B cell (primary cell): ENCODE measurements at regions of chr19 and their contacts with region 1.

Region 1: GRCh38 chr19:12736995-12737834 is at the start of gene GET3:
- DNase-seq: peak; percentile 93
- ATAC-seq: peak; percentile 76
- H3K4me3 ChIP-seq: peak within 1 kb of the TSS; percentile 67 to 93 (median 86)
- H3K4me3 Mint-ChIP-seq: peak within 1 kb of the TSS; percentile 100
- H3K27ac ChIP-seq: peak within 1 kb of the TSS; percentile 72 to 94
- H3K27ac Mint-ChIP-seq: peak within 1 kb of the TSS; percentile 99
- H3K4me1 ChIP-seq: peaks cover 36 to 43% of the 10 kb centered on the region in 2 donors
- H3K4me1 Mint-ChIP-seq: peaks cover 39% of the 10 kb centered on the region
- H3K27me3 ChIP-seq: no peaks in the 10 kb centered on the region
- H3K27me3 Mint-ChIP-seq: no peaks in the 10 kb centered on the region
- CTCF ChIP-seq: no peak
- total RNA-seq, gene GET3: 30.7 and 37.2 TPM in 2 replicates

Region 2: DNA sequence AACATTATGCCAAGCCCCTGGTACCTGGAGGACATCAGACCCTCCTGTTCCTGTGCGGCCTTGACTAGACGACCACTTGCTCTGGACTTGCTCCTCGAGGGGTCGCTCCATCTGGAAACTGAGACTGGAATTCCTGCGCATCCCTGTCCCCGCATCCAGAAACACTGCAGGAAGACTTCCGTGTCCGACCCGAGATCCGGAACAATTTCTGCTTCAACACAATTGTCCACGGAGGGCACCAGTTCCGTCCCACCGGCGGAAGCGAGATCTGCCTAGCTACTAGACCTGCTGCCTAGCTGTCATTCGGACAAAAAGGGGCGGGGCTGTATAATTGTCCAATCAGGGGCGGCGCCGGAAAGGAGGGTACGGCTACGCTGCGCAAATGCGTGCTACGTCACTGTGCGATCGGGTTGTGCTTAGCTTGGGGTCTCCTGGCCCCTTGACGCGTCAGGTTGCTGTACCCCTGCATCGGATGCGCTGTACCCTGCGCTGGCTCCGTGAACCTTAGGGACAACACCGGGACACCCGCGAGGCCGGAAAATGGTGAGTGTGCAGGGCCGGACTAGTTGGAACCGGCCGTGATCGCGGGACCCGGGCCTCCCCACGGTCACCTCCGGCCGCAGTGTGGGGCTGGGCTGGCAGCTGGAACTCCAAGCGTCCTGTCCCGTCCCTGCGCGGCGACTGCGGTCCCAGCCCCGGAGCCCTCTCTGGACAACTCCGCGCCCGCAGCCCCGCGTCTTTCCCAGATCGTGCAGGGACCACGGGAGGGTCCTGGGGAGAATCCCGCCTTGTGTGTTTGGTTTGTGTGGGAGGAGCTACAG is 126.5 kb before region 1 on chr19 and contains the starts of genes ZNF490 and ZNF791:
- CTCF ChIA-PET with region 1: interaction called, 4 read pairs
- POLR2A ChIA-PET with region 1: no interaction called
- intact Hi-C with region 1: loop called (anchors 5 kb)
- DNase-seq: peak; percentile 97
- ATAC-seq: peak; percentile 73
- H3K4me3 ChIP-seq: peak within 1 kb of the TSS; percentile 89 to 99 (median 98)
- H3K4me3 Mint-ChIP-seq: peak within 1 kb of the TSS; percentile 100
- H3K27ac ChIP-seq: peak within 1 kb of the TSS; percentile 93 to 96
- H3K27ac Mint-ChIP-seq: peak within 1 kb of the TSS; percentile 100
- H3K4me1 ChIP-seq: peaks cover 50 to 72% of the 10 kb centered on the region in 2 donors
- H3K4me1 Mint-ChIP-seq: peaks cover 54% of the 10 kb centered on the region
- H3K27me3 ChIP-seq: no peaks in the 10 kb centered on the region
- H3K27me3 Mint-ChIP-seq: no peaks in the 10 kb centered on the region
- CTCF ChIP-seq: no peak
- total RNA-seq, gene ZNF490: 19.9 and 21.2 TPM in 2 replicates
- total RNA-seq, gene ZNF791: 56.0 and 57.9 TPM in 2 replicates

Region 3: GRCh38 chr19:12628040-12629022 is 108.9 kb before region 1 on chr19:
- CTCF ChIA-PET with region 1: no interaction called
- POLR2A ChIA-PET with region 1: no interaction called
- intact Hi-C with region 1: no loop called
- DNase-seq: no peak
- ATAC-seq: no peak
- H3K4me3 ChIP-seq: no peak overlapping the region
- H3K4me3 Mint-ChIP-seq: no peak overlapping the region
- H3K27ac ChIP-seq: no peak overlapping the region
- H3K27ac Mint-ChIP-seq: no peak overlapping the region
- H3K4me1 ChIP-seq: no peaks in the 10 kb centered on the region
- H3K4me1 Mint-ChIP-seq: peaks cover 3% of the 10 kb centered on the region
- H3K27me3 ChIP-seq: no peaks in the 10 kb centered on the region
- H3K27me3 Mint-ChIP-seq: no peaks in the 10 kb centered on the region
- CTCF ChIP-seq: no peak

Region 4: GRCh38 chr19:12696366-12697335 is 40.6 kb before region 1 on chr19 and contains the start of gene FBXW9:
- CTCF ChIA-PET with region 1: interaction called, 6 read pairs
- POLR2A ChIA-PET with region 1: interaction called, 3 read pairs
- intact Hi-C with region 1: loop called (anchors 1 kb)
- DNase-seq: peak; percentile 98
- ATAC-seq: peak; percentile 87
- H3K4me3 ChIP-seq: peak within 1 kb of the TSS; percentile 64 to 88 (median 82)
- H3K4me3 Mint-ChIP-seq: peak within 1 kb of the TSS; percentile 94
- H3K27ac ChIP-seq: peak within 1 kb of the TSS; percentile 85 to 93
- H3K27ac Mint-ChIP-seq: peak within 1 kb of the TSS; percentile 98
- H3K4me1 ChIP-seq: peaks cover 13 to 17% of the 10 kb centered on the region in 2 donors
- H3K4me1 Mint-ChIP-seq: peaks cover 10% of the 10 kb centered on the region
- H3K27me3 ChIP-seq: no peaks in the 10 kb centered on the region
- H3K27me3 Mint-ChIP-seq: no peaks in the 10 kb centered on the region
- CTCF ChIP-seq: no peak
- total RNA-seq, gene FBXW9: 4.7 and 5.2 TPM in 2 replicates

Region 5: DNA sequence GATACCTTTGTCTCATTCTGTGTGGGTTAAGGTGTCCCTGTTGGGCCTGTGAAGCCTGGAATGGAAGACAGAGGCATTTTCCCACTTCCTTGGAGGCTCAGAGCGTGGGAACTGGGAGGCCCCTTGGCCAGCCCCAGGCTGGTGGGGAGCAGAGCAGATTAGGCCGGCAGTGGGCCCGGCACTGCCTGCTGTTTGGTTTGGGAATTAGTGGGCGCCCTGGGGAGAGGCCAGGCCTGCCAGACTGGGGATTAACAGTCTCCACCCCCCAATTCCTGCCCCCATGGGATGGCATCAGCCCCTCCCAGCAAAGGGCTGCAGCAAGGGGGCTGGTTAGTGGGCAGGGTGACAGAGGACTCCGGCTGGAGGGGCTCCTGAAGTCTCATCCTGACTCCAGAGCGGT is 11.3 kb after region 1 on chr19:
- CTCF ChIA-PET with region 1: no interaction called
- POLR2A ChIA-PET with region 1: no interaction called
- intact Hi-C with region 1: no loop called
- DNase-seq: no peak
- ATAC-seq: no peak
- H3K4me3 ChIP-seq: no peak overlapping the region
- H3K4me3 Mint-ChIP-seq: no peak overlapping the region
- H3K27ac ChIP-seq: no peak overlapping the region
- H3K27ac Mint-ChIP-seq: no peak overlapping the region
- H3K4me1 ChIP-seq: peaks cover 5 to 7% of the 10 kb centered on the region in 2 donors
- H3K4me1 Mint-ChIP-seq: peaks cover 4% of the 10 kb centered on the region
- H3K27me3 ChIP-seq: peaks cover 0 to 4% (median 0%) of the 10 kb centered on the region in 4 experiments
- H3K27me3 Mint-ChIP-seq: peaks cover 21% of the 10 kb centered on the region
- CTCF ChIP-seq: no peak

Region 6: DNA sequence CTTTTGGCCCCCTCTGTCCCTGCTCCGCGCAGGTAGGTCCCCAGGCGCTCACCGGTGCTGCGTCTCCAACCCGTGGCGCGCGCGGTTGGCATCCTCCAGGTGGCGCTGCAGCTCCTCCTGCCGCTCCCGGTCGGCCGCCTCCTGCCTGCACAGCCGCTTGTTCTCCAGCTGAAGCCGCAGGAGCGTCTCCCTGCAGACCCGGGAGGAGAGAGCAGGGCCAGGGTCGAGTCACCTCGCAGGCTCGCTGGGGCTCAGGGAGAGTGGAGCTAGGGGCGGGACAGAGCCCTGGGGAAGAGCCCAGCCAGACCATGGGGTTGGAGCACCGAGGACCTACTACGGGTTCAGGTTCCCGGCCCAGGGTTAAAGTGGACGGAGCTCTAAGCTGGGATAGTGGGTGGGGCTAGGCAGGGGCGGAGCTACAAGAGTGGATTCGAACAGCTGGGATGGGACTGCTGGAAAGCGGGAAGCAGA is 28.9 kb after region 1 on chr19:
- CTCF ChIA-PET with region 1: interaction called, 47 read pairs
- POLR2A ChIA-PET with region 1: no interaction called
- intact Hi-C with region 1: no loop called
- DNase-seq: peak; percentile 87
- ATAC-seq: peak; percentile 65
- H3K4me3 ChIP-seq: no peak overlapping the region
- H3K4me3 Mint-ChIP-seq: no peak overlapping the region
- H3K27ac ChIP-seq: no peak overlapping the region
- H3K27ac Mint-ChIP-seq: no peak overlapping the region
- H3K4me1 ChIP-seq: peaks cover 6 to 8% of the 10 kb centered on the region in 2 donors
- H3K4me1 Mint-ChIP-seq: peaks cover 10% of the 10 kb centered on the region
- H3K27me3 ChIP-seq: no peaks in the 10 kb centered on the region
- H3K27me3 Mint-ChIP-seq: no peaks in the 10 kb centered on the region
- CTCF ChIP-seq: peak; percentile 90

Region 7: DNA sequence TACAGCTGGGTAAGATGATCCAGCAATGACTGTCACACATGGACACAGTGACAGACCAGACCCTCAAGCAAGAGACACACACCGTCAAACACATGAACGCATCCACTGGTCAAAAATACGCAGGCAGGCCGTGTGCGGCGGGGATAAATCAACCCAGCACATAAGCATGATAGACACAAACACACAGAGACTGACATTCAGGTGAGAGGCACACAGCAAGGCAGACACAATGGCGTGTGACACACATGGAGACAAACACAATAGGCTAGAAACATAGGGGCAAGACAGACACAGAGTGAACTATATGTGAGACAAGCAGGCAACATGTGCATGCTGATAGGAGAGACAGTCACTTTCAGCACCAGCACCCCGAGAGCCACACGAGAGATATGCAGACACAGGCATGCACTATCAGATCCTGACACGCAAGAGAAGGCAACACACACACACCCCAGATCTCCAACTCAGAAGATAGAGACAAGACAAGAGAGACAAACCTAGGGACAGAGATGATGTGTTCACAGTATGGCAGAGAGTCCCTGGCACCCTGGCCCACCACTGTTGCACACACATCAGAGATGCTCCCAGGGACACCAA is 47.2 kb after region 1 on chr19:
- CTCF ChIA-PET with region 1: no interaction called
- POLR2A ChIA-PET with region 1: no interaction called
- intact Hi-C with region 1: no loop called
- DNase-seq: no peak
- ATAC-seq: no peak
- H3K4me3 ChIP-seq: no peak overlapping the region
- H3K4me3 Mint-ChIP-seq: no peak overlapping the region
- H3K27ac ChIP-seq: peak overlapping the region; percentile 92 to 97
- H3K27ac Mint-ChIP-seq: no peak overlapping the region
- H3K4me1 ChIP-seq: peaks cover 75 to 81% of the 10 kb centered on the region in 2 donors
- H3K4me1 Mint-ChIP-seq: peaks cover 46% of the 10 kb centered on the region
- H3K27me3 ChIP-seq: no peaks in the 10 kb centered on the region
- H3K27me3 Mint-ChIP-seq: no peaks in the 10 kb centered on the region
- CTCF ChIP-seq: no peak

Region 8: GRCh38 chr19:12806239-12807081 is 69.2 kb after region 1 on chr19 and contains the start of gene RNASEH2A:
- CTCF ChIA-PET with region 1: no interaction called
- POLR2A ChIA-PET with region 1: no interaction called
- intact Hi-C with region 1: loop called (anchors 1 kb)
- DNase-seq: peak; percentile 93
- ATAC-seq: peak; percentile 95
- H3K4me3 ChIP-seq: peak within 1 kb of the TSS; percentile 51 to 82 (median 73)
- H3K4me3 Mint-ChIP-seq: peak within 1 kb of the TSS; percentile 96
- H3K27ac ChIP-seq: peak within 1 kb of the TSS; percentile 36 to 61
- H3K27ac Mint-ChIP-seq: peak within 1 kb of the TSS; percentile 87
- H3K4me1 ChIP-seq: peaks cover 14 to 23% of the 10 kb centered on the region in 2 donors
- H3K4me1 Mint-ChIP-seq: peaks cover 25% of the 10 kb centered on the region
- H3K27me3 ChIP-seq: no peaks in the 10 kb centered on the region
- H3K27me3 Mint-ChIP-seq: peaks cover 3% of the 10 kb centered on the region
- CTCF ChIP-seq: no peak
- total RNA-seq, gene RNASEH2A: 16.9 and 18.9 TPM in 2 replicates